Esophagus muscularis mucosa (tissue), 4 donors: ENCODE measurements at regions of chr7 and their contacts with region 1.

Region 1: DNA sequence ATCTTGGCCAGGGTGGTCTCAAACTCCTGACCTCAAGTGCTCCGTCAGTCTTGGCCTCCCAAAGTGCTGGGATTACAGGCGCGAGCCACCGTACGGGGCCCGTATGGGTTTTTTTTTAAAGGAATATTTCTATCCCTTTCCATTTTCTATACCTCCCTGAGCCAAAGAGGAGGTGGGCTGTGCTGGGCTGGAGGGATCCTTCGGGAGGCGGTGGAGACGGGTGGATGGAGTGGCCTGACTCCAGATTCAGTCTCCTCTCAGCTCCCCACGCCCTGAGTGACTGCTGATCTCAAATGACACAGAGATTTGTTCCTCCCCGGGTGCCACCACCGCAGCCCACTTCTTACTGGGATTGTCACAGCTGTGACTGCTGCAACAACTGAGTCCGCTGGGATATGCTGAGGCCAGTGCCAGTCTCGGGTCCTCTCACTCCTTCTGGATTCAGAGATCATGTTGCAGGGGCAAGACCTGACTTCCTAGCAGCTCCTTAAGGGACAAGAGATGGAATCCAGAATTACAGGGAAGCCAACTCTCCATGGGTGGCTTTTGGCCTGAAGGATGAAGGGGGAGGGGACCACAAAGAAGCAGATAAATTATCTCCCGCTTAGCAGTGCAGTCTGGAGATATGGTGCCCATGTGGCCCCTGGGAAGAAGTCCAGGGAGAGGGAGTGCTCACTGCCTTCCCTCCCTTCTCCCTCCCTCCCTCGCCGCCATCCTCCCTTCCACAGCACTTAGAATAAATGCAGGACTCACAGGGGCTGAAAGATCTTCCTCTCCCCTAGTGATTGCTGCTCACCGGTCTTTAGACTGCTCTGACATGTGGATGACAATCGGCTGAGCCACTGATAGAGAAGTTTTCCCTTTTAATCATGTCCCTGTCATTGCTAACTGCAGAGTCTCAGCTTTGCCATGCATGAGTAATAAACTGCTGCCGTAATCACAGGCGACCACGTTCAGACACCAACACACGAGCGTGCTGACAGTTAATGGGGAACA is 14.3 kb downstream of the GALNT17 start:
- DNase-seq: no peak
- H3K4me3 ChIP-seq: no peak overlapping the region
- H3K27ac ChIP-seq: peak overlapping the region in 1 of 4 donors; percentile 8
- H3K4me1 ChIP-seq: peaks cover 2 to 16% (median 12%) of the 10 kb centered on the region in 4 donors
- H3K27me3 ChIP-seq: no peaks in the 10 kb centered on the region
- CTCF ChIP-seq: no peak
- EP300 ChIP-seq: no peak
- POLR2A ChIP-seq: no peak

Region 2: DNA sequence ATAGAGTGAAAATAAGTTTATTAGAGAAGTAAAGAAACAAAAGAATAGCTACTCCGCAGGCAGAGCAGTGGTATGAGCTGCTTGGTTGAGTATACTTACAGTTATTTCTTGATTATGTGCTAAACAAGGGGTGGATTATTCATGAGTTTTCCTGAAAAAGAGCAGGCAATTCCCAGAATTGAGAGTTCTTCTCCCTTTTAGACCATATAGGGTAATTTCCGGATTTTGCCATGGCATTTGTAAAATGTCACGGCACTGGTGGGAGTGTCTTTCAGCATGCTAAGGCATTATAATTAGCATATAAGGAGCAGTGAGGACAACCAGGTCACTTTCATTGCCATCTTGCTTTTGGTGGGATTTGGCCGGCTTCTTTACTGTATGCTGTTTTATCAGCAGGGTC is 40.0 kb before region 1 on chr7:
- intact Hi-C with region 1: no loop called
- DNase-seq: no peak
- H3K4me3 ChIP-seq: no peak overlapping the region
- H3K27ac ChIP-seq: no peak overlapping the region
- H3K4me1 ChIP-seq: no peaks in the 10 kb centered on the region
- H3K27me3 ChIP-seq: no peaks in the 10 kb centered on the region
- CTCF ChIP-seq: no peak
- EP300 ChIP-seq: no peak
- POLR2A ChIP-seq: no peak

Region 3: GRCh38 chr7:71198887-71199286 is 52.7 kb after region 1 on chr7:
- intact Hi-C with region 1: loop called (anchors 10 kb)
- DNase-seq: no peak
- H3K4me3 ChIP-seq: no peak overlapping the region
- H3K27ac ChIP-seq: peak overlapping the region in 3 of 4 donors; percentile 38 to 61 (median 44)
- H3K4me1 ChIP-seq: peaks cover 0 to 18% (median 8%) of the 10 kb centered on the region in 4 donors
- H3K27me3 ChIP-seq: no peaks in the 10 kb centered on the region
- CTCF ChIP-seq: no peak
- EP300 ChIP-seq: no peak
- POLR2A ChIP-seq: no peak

Region 4: DNA sequence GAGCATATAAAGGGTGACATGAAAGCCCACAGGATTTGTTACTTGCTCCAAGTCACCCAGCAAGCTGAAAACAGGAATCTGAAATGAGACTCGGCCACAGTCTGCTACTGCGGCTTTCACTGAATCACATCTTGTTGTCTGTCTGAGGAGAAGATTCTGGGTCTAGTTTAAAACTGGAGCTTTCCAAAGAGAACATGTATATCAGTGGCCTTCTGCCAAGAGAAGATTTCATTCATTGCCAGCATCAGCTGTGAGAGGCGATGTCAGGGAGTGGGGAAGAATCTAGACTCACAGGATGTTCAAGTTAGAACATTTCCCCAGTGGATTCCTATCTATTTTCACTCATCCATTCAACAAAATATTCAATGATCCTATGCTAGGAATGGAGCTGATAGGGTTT is 108.5 kb after region 1 on chr7:
- intact Hi-C with region 1: no loop called
- DNase-seq: no peak
- H3K4me3 ChIP-seq: no peak overlapping the region
- H3K27ac ChIP-seq: no peak overlapping the region
- H3K4me1 ChIP-seq: peaks cover 0 to 3% (median 0%) of the 10 kb centered on the region in 4 donors
- H3K27me3 ChIP-seq: no peaks in the 10 kb centered on the region
- CTCF ChIP-seq: no peak
- EP300 ChIP-seq: no peak
- POLR2A ChIP-seq: no peak

Region 5: GRCh38 chr7:71313553-71313952 is 167.3 kb after region 1 on chr7:
- intact Hi-C with region 1: no loop called
- DNase-seq: no peak
- H3K4me3 ChIP-seq: no peak overlapping the region
- H3K27ac ChIP-seq: peak overlapping the region; percentile 48 to 88 (median 58)
- H3K4me1 ChIP-seq: peaks cover 15 to 65% (median 50%) of the 10 kb centered on the region in 4 donors
- H3K27me3 ChIP-seq: no peaks in the 10 kb centered on the region
- CTCF ChIP-seq: no peak
- EP300 ChIP-seq: no peak
- POLR2A ChIP-seq: no peak

Region 6: DNA sequence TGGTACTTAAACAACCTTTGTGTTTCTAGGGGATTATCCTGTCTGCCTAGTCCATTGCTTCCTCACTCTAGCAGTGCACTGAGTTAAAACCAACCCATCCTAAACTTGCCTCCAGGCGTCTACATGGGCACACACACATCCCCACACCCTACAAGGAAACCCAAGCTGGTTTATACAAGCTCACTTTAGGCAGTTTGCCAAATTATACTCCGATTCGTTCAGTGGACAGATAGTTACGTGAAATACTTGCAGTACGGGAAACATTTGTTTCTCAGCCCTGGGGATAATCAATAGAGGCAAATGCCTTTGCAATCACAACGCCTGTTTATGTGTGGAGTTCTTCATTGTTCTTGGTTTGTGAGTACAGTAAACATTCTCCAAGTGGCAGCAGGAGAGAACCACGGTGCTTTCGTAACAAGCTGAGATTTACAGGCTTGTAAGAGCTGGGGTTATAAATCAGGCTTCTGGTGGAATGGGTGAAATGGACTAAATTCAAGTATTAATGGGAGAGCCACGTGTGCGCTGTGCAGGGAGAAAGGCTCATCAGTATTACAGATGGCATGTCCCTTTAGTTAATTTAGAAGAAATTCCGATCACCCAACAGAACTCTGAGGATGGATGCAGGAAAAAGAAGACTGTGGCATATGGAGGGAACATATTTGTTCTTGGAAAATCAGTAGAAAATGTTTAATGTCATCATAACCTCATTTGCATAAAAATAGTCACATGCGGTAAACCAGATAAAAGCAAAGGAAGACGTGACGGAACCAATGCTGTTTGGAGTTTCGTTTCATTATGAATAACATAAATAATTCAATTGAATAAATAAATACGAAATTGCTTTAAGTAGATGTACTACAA is 202.8 kb after region 1 on chr7:
- intact Hi-C with region 1: loop called (anchors 10 kb)
- DNase-seq: no peak
- H3K4me3 ChIP-seq: peak overlapping the region; percentile 25 to 38 (median 28)
- H3K27ac ChIP-seq: peak overlapping the region in 3 of 4 donors; percentile 20 to 60 (median 34)
- H3K4me1 ChIP-seq: peaks cover 0 to 19% (median 16%) of the 10 kb centered on the region in 4 donors
- H3K27me3 ChIP-seq: no peaks in the 10 kb centered on the region
- CTCF ChIP-seq: no peak
- EP300 ChIP-seq: no peak
- POLR2A ChIP-seq: no peak